ENCODE measurements at regions of chr15 and their contacts with region 1.

Region 1: DNA sequence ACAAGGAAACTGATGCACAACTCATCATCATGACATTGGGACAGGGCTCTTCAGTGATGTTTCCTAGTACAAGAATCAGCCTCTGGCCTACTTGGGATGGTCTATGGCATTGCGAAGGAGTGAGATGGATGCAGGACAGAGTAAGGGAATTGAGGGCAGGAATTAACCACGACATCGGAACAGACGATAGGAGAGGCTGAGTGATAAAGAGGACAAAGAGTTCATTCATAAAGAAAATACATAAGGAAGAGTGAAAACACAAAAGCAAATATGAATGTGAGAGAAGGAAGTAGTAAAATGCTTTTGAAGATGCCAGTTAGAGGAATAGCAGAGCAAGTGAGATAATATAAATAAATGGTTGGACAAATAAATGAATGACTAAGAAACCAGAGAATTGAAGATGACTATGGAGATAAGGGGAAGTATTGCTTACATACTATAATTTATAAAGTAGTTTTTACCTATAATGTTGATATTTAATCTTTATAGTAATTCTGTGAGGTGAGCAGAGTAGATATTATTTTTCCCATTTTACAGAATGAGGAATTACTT is 203.2 kb downstream of the DTWD1 start:
- DNase-seq: no peak
- ATAC-seq: no peak
- H3K4me3 ChIP-seq: no peak overlapping the region
- H3K27ac ChIP-seq: no peak overlapping the region
- H3K4me1 ChIP-seq: no peaks in the 10 kb centered on the region
- H3K27me3 ChIP-seq: no peaks in the 10 kb centered on the region
- CTCF ChIP-seq: no peak
- POLR2A ChIP-seq: no peak

Region 2: DNA sequence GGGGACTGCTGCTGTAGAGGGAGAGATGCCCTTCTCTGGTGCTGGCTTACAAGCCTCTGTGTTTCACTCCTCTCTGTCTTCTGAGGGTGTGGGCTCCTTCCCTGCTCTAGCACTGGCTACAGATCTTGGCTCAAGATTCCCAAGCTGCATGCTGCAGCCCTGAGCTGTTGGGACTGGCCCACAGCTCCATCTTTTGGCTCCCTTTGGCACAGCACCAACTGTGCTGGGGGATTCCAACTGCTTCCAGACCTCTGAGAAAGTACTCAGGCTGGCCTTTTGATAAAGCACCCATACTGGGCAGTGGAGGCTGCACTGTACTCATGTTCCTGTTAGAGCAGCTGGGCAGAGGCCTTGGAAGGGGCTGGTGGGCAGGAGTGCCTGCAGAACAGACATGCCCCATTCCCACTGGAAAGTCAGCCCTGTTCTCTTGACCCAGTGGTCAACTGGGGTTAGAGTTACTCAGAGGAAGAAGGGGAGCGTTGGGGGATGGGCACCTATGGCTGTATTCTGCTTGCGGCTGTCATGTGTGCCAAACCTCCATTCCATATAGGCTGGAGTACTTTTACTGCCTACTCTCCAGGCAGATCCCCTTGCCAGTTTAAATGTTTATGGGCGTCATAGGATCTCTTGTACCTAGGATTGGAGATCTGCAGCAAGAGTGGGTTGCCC is 598.3 kb before region 1 on chr15:
- intact Hi-C with region 1: loop called (anchors 10 kb)
- DNase-seq: no peak
- ATAC-seq: no peak
- H3K4me3 ChIP-seq: no peak overlapping the region
- H3K27ac ChIP-seq: no peak overlapping the region
- H3K4me1 ChIP-seq: no peaks in the 10 kb centered on the region
- H3K27me3 ChIP-seq: no peaks in the 10 kb centered on the region
- CTCF ChIP-seq: no peak
- POLR2A ChIP-seq: no peak

Region 3: GRCh38 chr15:50315814-50316630 is 492.0 kb after region 1 on chr15:
- intact Hi-C with region 1: no loop called
- DNase-seq: no peak
- ATAC-seq: no peak
- H3K4me3 ChIP-seq: no peak overlapping the region
- H3K27ac ChIP-seq: no peak overlapping the region
- H3K4me1 ChIP-seq: no peaks in the 10 kb centered on the region
- H3K27me3 ChIP-seq: no peaks in the 10 kb centered on the region
- CTCF ChIP-seq: peak; percentile 21 to 68 (median 57)
- POLR2A ChIP-seq: no peak

Measured in body of pancreas (tissue), 4 donors.